MCF 10A (cell line): ENCODE measurements at regions of chr5 and their contacts with region 1.

Region 1: GRCh38 chr5:2075365-2075764 is 192.6 kb upstream of the IRX4 start:
- DNase-seq: no peak
- H3K4me3 Mint-ChIP-seq: no peak overlapping the region
- H3K27ac Mint-ChIP-seq: no peak overlapping the region
- H3K4me1 Mint-ChIP-seq: no peaks in the 10 kb centered on the region
- H3K27me3 Mint-ChIP-seq: no peaks in the 10 kb centered on the region
- CTCF ChIP-seq: no peak

Region 2: GRCh38 chr5:1815952-1816292 is 259.4 kb before region 1 on chr5:
- CTCF ChIA-PET with region 1: no interaction called
- POLR2A ChIA-PET with region 1: no interaction called
- intact Hi-C with region 1: no loop called
- DNase-seq: no peak
- H3K4me3 Mint-ChIP-seq: no peak overlapping the region
- H3K27ac Mint-ChIP-seq: no peak overlapping the region
- H3K4me1 Mint-ChIP-seq: no peaks in the 10 kb centered on the region
- H3K27me3 Mint-ChIP-seq: no peaks in the 10 kb centered on the region
- CTCF ChIP-seq: no peak

Region 3: GRCh38 chr5:2047341-2047927 is 27.9 kb before region 1 on chr5:
- CTCF ChIA-PET with region 1: no interaction called
- POLR2A ChIA-PET with region 1: no interaction called
- intact Hi-C with region 1: no loop called
- DNase-seq: no peak
- H3K4me3 Mint-ChIP-seq: no peak overlapping the region
- H3K27ac Mint-ChIP-seq: no peak overlapping the region
- H3K4me1 Mint-ChIP-seq: no peaks in the 10 kb centered on the region
- H3K27me3 Mint-ChIP-seq: peaks cover 51% of the 10 kb centered on the region
- CTCF ChIP-seq: no peak

Region 4: GRCh38 chr5:2105141-2105540 is 29.8 kb after region 1 on chr5:
- CTCF ChIA-PET with region 1: no interaction called
- POLR2A ChIA-PET with region 1: no interaction called
- intact Hi-C with region 1: no loop called
- DNase-seq: no peak
- H3K4me3 Mint-ChIP-seq: no peak overlapping the region
- H3K27ac Mint-ChIP-seq: no peak overlapping the region
- H3K4me1 Mint-ChIP-seq: no peaks in the 10 kb centered on the region
- H3K27me3 Mint-ChIP-seq: no peaks in the 10 kb centered on the region
- CTCF ChIP-seq: no peak

Region 5: GRCh38 chr5:2496126-2496525 is 420.8 kb after region 1 on chr5:
- CTCF ChIA-PET with region 1: no interaction called
- POLR2A ChIA-PET with region 1: no interaction called
- intact Hi-C with region 1: no loop called
- DNase-seq: no peak
- H3K4me3 Mint-ChIP-seq: no peak overlapping the region
- H3K27ac Mint-ChIP-seq: no peak overlapping the region
- H3K4me1 Mint-ChIP-seq: no peaks in the 10 kb centered on the region
- H3K27me3 Mint-ChIP-seq: no peaks in the 10 kb centered on the region
- CTCF ChIP-seq: no peak

Region 6: GRCh38 chr5:2739360-2740050 is 664.1 kb after region 1 on chr5:
- CTCF ChIA-PET with region 1: no interaction called
- POLR2A ChIA-PET with region 1: no interaction called
- intact Hi-C with region 1: loop called (anchors 10 kb)
- DNase-seq: peak; percentile 27
- H3K4me3 Mint-ChIP-seq: peak overlapping the region; percentile 45
- H3K27ac Mint-ChIP-seq: no peak overlapping the region
- H3K4me1 Mint-ChIP-seq: peaks cover 19% of the 10 kb centered on the region
- H3K27me3 Mint-ChIP-seq: no peaks in the 10 kb centered on the region
- CTCF ChIP-seq: no peak